Psoas muscle (tissue), 8 donors: ENCODE measurements at regions of chr7 and their contacts with region 1.

Region 1: GRCh38 chr7:141014524-141015395 is at the start of gene MRPS33:
- DNase-seq: peak; percentile 93 to 96
- ATAC-seq: peak; percentile 99 to 100 (median 100)
- H3K4me3 ChIP-seq: peak within 1 kb of the TSS; percentile 85
- H3K27ac ChIP-seq: peak within 1 kb of the TSS; percentile 87
- H3K4me1 ChIP-seq: peaks cover 11% of the 10 kb centered on the region
- H3K27me3 ChIP-seq: peaks cover 0 to 7% (median 0%) of the 10 kb centered on the region in 3 donors
- CTCF ChIP-seq: peak; percentile 15
- total RNA-seq, gene MRPS33: 70.5 to 105 (median 93.7) TPM

Region 2: DNA sequence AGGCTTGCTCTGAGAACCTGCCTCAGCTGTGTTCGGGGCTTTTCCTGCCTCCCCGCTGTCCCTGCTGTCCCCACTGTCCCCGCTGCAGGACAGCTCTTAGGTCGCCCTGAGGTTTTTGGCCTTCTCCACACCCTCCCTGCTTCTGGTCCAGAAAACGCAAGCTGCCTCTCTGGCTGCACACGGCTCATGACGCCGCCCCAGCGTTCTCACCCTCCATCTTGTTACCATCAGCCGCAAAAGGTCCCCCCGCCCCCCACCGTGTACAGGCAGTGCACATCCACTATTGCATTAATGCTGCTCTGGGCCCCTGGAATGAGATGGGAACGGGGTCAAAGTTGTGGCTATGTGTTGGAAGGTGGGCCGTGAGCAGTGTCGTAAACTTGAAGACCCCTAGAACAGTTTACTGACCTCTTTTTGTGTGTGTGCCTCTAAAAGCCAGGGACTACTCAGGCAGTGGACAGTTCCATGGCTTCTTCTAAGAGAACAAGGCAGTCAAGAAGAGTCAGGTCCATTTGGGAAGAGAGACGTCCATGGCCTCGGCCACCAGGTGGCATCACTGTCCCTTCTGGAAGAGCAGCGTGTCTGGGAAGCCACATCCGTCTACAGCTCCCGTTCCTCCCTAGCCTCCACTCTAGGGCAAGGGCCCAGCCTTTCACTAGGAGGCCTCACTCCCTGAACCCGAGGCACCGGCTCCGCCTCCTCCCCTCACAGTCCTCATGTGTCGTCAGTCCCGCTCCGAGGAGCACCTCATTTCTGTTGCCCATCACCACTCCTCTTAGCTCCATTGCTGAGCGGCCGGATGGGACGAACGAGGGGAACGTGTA is 497.0 kb before region 1 on chr7:
- intact Hi-C with region 1: loop called in 1 of 2 experiments (anchors 5 kb)
- DNase-seq: peak; percentile 89 to 93
- ATAC-seq: peak; percentile 94 to 97 (median 96)
- H3K4me3 ChIP-seq: no peak overlapping the region
- H3K27ac ChIP-seq: peak overlapping the region; percentile 36
- H3K4me1 ChIP-seq: no peaks in the 10 kb centered on the region
- H3K27me3 ChIP-seq: no peaks in the 10 kb centered on the region
- CTCF ChIP-seq: peak; percentile 89

Region 3: DNA sequence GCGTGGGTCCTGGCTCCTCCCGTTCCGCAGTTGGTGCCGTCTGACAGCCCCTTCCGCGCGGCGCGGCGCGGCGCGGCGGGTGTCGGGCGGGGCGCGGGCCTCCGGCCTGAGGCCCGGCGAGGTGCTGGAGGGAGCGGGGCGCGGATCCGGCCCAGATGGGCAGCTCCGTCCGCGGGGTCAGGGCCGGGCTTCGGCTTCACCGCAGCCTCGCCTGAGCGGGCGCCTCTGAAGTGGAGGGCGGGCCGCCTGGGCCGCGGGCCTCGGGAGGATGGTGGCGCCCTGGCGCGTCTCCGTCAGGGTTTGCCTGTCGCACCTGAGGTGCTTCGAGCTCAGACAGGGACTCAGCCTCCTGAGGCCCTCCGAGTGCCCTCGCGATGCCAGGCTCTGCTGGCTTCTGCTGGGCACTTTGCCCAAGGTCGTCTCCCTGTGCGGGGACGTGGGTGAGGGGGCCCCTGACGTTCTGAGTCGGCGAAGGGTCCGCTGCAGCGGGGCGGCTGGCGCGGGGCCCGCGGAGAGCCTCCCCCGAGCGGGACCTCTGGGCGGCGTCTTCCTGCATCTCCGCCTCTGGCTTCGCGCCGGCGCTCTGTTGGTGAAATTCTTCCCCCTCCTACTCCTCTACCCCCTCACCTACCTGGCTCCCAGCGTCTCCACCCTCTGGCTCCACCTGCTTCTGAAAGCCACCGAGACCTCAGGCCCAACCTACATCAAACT is 341.5 kb before region 1 on chr7:
- intact Hi-C with region 1: loop called in 1 of 2 experiments (anchors 10 kb)
- DNase-seq: peak; percentile 40 to 73
- ATAC-seq: peak; percentile 54 to 66 (median 58)
- H3K4me3 ChIP-seq: peak overlapping the region; percentile 91
- H3K27ac ChIP-seq: peak overlapping the region; percentile 77
- H3K4me1 ChIP-seq: peaks cover 32% of the 10 kb centered on the region
- H3K27me3 ChIP-seq: no peaks in the 10 kb centered on the region
- CTCF ChIP-seq: no peak